ENCODE measurements at regions of chr10 and their contacts with region 1.

Region 1: DNA sequence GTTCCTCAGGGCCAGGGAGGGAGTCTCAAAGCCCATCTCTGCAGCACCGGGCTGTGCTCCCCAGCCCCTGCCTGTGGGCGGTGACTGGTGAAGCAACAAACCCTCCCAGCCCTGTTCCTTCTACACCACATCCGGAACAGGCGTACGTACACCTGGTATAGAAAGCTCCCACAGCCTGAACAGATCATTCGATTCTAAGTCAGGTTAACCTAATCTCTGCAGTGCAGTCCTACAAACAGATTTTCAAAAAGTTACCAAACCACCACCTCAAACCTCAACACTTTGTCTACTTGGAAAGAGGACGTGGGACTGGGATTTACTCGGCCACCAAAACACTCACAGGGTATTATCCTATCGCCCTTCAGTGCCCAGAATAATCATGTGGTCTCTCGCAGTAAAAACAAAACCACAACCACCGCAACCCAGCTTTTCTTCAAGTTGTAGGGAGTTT is 238.4 kb downstream of the DIP2C start:
- DNase-seq: peak; percentile 42 to 87 (median 76)
- ATAC-seq: peak; percentile 96
- H3K4me3 Mint-ChIP-seq: peak overlapping the region; percentile 57 to 85 (median 72)
- H3K27ac Mint-ChIP-seq: peak overlapping the region; percentile 30 to 96 (median 88)
- H3K4me1 Mint-ChIP-seq: peaks cover 36 to 76% (median 60%) of the 10 kb centered on the region in 4 donors
- H3K27me3 Mint-ChIP-seq: no peaks in the 10 kb centered on the region

Region 2: DNA sequence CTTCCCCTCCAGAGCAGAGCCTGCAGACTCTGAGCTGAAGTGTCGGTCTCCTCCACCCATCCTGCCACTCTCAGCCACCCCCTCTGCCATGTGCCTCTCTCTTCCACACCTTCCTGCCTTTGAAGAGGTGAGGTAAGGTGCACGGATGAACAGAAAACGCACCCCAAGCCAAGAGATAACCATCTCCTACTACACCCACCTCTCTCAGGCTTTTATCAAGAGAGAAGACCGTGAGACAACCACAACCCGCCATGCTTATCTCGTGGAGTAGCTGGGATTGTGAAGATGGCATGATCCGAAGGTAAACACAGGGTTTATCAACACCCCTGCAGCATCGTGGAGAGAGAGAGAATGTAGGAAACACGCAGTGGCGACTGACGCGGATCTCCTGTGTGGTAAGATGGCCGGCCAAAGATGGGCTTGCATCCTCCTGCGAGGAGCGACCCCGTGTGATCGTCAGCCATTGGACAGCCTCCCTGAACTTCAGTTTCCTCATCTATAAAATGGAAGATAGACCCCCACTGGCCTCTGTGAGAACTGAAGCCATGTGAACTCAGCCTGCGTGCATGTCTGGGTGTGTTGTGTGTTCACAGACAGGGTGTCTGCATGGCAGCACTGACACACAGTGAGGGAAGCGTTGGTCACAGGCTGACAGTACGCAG is 19.4 kb after region 1 on chr10:
- POLR2A ChIA-PET with region 1: interaction called, 22 read pairs
- DNase-seq: peak in 9 of 10 donors; percentile 37 to 82 (median 68)
- ATAC-seq: peak; percentile 84 to 88
- H3K4me3 Mint-ChIP-seq: peak overlapping the region; percentile 68 to 87 (median 77)
- H3K27ac Mint-ChIP-seq: peak overlapping the region; percentile 85 to 97 (median 94)
- H3K4me1 Mint-ChIP-seq: peaks cover 14 to 31% (median 21%) of the 10 kb centered on the region in 4 donors
- H3K27me3 Mint-ChIP-seq: peaks cover 0 to 4% (median 0%) of the 10 kb centered on the region in 5 donors

Region 3: GRCh38 chr10:484441-484924 is 33.4 kb after region 1 on chr10:
- POLR2A ChIA-PET with region 1: interaction called, 13 read pairs
- DNase-seq: peak in 3 of 10 donors; percentile 13 to 37 (median 16)
- ATAC-seq: peak; percentile 72 to 79
- H3K4me3 Mint-ChIP-seq: peak overlapping the region; percentile 77 to 92 (median 88)
- H3K27ac Mint-ChIP-seq: peak overlapping the region; percentile 39 to 98 (median 94)
- H3K4me1 Mint-ChIP-seq: peaks cover 11 to 34% (median 24%) of the 10 kb centered on the region in 4 donors
- H3K27me3 Mint-ChIP-seq: peaks cover 0 to 2% (median 0%) of the 10 kb centered on the region in 5 donors

Measured in naive thymus-derived CD8-positive, alpha-beta T cell (primary cell).